ENCODE measurements at regions of chr3 and their contacts with region 1.

Region 1: DNA sequence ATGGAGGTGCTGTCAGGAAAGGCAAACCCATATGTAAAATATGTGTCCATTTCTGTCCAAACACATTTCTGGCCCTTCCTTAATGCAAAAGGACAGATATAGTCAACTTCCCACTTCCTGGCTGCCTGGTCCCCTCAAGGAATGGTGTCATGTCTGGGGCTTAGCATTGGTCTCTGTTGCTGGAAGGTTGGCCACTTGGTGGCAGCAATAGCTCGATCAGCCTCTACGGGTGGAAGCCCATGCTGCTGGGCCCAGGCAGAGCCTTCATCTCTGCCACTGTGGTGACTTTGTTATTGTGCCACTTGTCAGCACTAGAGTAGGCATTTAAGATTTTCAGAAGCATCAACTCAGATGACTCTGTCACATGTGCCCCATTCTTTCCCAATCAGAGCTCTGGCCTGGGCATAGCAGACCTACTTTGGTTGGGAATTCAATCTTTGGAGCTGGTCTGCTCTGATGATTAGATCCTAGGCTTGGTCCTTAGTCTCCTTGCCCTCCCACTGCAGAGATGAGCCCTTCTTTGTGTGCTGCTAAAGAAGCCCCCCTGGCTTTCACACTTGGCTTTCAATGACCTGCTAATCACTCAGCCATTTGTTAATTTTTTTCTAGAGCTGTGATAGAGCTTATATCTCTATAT is 51.0 kb upstream of the SPSB4 start:
- DNase-seq: peak; percentile 34 to 76
- H3K4me3 ChIP-seq: no peak overlapping the region
- H3K27ac ChIP-seq: no peak overlapping the region
- H3K4me1 ChIP-seq: no peaks in the 10 kb centered on the region
- H3K27me3 ChIP-seq: no peaks in the 10 kb centered on the region
- CTCF ChIP-seq: peak; percentile 87 to 97 (median 95)
- EP300 ChIP-seq: no peak
- POLR2A ChIP-seq: no peak
- RAD21 ChIP-seq: peak; percentile 99

Region 2: DNA sequence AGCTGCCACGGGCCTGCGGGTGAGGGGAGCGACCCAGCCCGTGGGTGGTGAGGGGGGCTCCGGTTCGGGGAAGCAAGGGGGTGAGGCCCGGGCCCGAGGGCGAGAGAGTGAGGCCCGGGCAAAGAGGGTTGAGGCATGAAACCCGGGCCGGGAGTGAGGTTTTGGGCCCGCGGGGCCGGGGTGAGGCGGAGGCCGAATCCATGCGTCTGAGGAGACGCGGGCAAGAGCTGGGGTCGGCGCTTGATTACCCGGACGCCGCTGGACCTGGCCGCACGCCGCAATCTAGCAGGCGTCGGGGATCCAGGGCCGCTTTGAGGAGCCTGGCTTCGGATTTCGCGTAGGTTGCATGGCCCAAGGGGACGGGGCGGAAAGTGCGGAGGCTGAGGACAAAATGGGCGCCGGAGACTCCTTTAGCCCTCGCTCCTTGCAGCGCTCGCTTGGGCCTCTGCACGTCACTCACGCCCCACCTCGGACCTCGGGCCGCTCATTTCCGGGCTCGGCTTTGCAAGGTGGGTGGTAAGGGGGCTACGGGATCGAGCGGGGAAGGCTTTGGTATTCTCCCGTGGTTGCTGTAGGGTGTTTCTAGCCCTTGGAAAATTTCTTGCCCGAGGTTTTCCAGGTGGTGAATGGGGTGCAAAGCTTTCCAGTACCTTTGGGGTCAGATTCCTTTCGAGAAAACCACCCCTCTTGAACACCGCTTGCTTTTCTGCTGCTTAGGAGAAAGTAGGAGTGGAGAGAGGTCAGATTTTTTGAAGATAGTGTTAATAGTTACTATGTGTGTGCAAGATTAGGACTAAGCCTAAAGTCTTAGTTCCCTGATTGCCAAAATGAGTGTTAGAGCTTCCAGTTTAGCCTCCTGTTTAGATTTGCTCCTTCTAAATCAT is 57.7 kb before region 1 on chr3:
- CTCF ChIA-PET with region 1: no interaction called
- POLR2A ChIA-PET with region 1: no interaction called
- DNase-seq: peak in 1 of 2 experiments; percentile 78
- H3K4me3 ChIP-seq: peak overlapping the region; percentile 76 to 95 (median 90)
- H3K27ac ChIP-seq: peak overlapping the region; percentile 97
- H3K4me1 ChIP-seq: no peaks in the 10 kb centered on the region; a peak in 2 of 7 replicates
- H3K27me3 ChIP-seq: no peaks in the 10 kb centered on the region
- CTCF ChIP-seq: no peak
- EP300 ChIP-seq: no peak
- POLR2A ChIP-seq: peak; percentile 73 to 79
- RAD21 ChIP-seq: no peak

Region 3: GRCh38 chr3:141151439-141151838 is 151.3 kb after region 1 on chr3:
- CTCF ChIA-PET with region 1: interaction called, 16 read pairs
- POLR2A ChIA-PET with region 1: no interaction called
- DNase-seq: no peak
- H3K4me3 ChIP-seq: no peak overlapping the region
- H3K27ac ChIP-seq: no peak overlapping the region
- H3K4me1 ChIP-seq: peaks cover 2 to 5% (median 3%) of the 10 kb centered on the region in 4 experiments; a peak in 6 of 7 replicates
- H3K27me3 ChIP-seq: no peaks in the 10 kb centered on the region
- CTCF ChIP-seq: no peak
- EP300 ChIP-seq: no peak
- POLR2A ChIP-seq: no peak
- RAD21 ChIP-seq: no peak

Region 4: GRCh38 chr3:141201122-141201521 is 201.0 kb after region 1 on chr3:
- CTCF ChIA-PET with region 1: interaction called, 137 read pairs
- POLR2A ChIA-PET with region 1: no interaction called
- DNase-seq: no peak
- H3K4me3 ChIP-seq: no peak overlapping the region
- H3K27ac ChIP-seq: no peak overlapping the region
- H3K4me1 ChIP-seq: no peaks in the 10 kb centered on the region; a peak in 2 of 7 replicates
- H3K27me3 ChIP-seq: no peaks in the 10 kb centered on the region
- CTCF ChIP-seq: no peak
- EP300 ChIP-seq: no peak
- POLR2A ChIP-seq: no peak
- RAD21 ChIP-seq: no peak